ENCODE measurements at regions of chr2 and their contacts with region 1.

Region 1: DNA sequence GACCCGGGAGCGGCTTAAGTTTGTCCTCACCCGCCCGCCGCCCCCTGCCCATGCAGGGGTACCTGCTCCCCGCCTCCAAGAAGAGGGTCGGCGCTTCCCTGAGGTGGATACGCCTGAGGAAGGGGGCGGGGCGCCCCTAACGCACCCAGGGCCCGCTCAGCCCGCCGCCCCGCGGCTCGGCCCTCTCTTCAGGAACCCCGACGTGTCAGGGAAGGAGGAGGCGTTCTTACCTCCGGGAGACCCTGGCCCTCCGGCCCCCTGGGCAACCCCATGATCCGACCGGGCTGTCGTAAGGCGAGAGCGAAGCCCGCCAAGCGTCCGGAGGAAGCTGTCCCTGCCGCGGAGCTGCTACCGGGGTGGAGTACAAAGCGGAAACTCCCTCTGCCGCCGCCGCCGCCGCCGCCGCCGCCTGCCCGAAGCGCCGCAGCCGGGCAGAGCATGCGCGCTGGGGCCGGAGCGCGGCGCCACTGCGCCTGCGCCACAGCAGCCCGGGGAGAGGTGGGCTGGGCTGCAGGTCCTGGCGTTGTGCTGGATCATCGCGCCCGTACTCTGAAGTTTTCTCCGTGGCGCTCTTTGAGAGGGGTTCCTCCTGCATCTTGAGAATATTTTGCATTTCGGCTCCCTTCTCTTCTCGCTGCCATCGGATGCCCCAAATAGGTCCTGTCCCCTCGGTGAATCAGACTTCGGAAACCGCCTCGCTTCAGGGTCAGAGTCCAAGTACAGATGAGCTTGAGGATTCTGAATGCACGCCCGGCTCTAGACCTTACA is at the start of gene CCDC93:
- DNase-seq: peak; percentile 78 to 91 (median 87)
- H3K4me3 ChIP-seq: peak within 1 kb of the TSS; percentile 74 to 91 (median 84)
- H3K4me3 Mint-ChIP-seq: peak within 1 kb of the TSS; percentile 97 to 99
- H3K27ac ChIP-seq: peak within 1 kb of the TSS; percentile 94 to 97
- H3K27ac Mint-ChIP-seq: peak within 1 kb of the TSS; percentile 92 to 97 (median 95)
- H3K4me1 ChIP-seq: peaks cover 58 to 71% of the 10 kb centered on the region in 2 donors
- H3K4me1 Mint-ChIP-seq: peaks cover 67% of the 10 kb centered on the region
- H3K27me3 ChIP-seq: no peaks in the 10 kb centered on the region
- H3K27me3 Mint-ChIP-seq: peaks cover 0 to 7% (median 2%) of the 10 kb centered on the region in 3 donors
- CTCF ChIP-seq: no peak
- polyA plus RNA-seq, gene CCDC93: 2.5 to 20.7 (median 5.8) TPM

Region 2: DNA sequence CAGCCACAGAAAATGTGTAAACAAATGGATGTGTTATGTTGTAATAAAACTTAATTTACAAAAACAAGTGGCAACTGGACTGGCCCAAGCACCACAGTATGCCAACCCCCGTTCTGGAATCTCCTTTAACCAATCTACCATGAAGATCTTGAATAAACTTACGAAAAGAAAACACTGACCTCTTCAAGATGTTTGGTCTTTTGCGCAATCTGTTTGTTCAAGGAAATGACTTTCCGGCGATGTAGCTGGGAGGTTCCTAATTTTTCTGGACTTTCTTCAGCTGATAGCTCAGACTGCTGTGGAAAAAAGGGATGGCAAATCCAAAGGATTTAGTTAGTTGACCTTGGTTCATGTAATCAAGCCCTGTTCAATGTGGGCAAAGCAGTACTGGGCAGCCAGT is 55.7 kb before region 1 on chr2:
- intact Hi-C with region 1: no loop called
- DNase-seq: peak in 2 of 3 donors; percentile 2 to 21
- H3K4me3 ChIP-seq: no peak overlapping the region
- H3K4me3 Mint-ChIP-seq: no peak overlapping the region
- H3K27ac ChIP-seq: peak overlapping the region in 1 of 2 donors; percentile 48
- H3K27ac Mint-ChIP-seq: peak overlapping the region in 6 of 7 donors; percentile 16 to 79 (median 42)
- H3K4me1 ChIP-seq: peaks cover 5 to 7% of the 10 kb centered on the region in 2 donors
- H3K4me1 Mint-ChIP-seq: peaks cover 11% of the 10 kb centered on the region
- H3K27me3 ChIP-seq: no peaks in the 10 kb centered on the region
- H3K27me3 Mint-ChIP-seq: peaks cover 0 to 2% (median 0%) of the 10 kb centered on the region in 3 donors
- CTCF ChIP-seq: no peak

Region 3: GRCh38 chr2:117979911-117980701 is 33.8 kb before region 1 on chr2:
- intact Hi-C with region 1: loop called in 1 of 2 experiments (anchors 2 kb)
- DNase-seq: peak; percentile 25 to 82 (median 75)
- H3K4me3 ChIP-seq: peak overlapping the region in 1 of 3 experiments; percentile 21
- H3K4me3 Mint-ChIP-seq: no peak overlapping the region
- H3K27ac ChIP-seq: peak overlapping the region; percentile 56 to 93
- H3K27ac Mint-ChIP-seq: peak overlapping the region; percentile 93 to 98 (median 97)
- H3K4me1 ChIP-seq: peaks cover 33 to 34% of the 10 kb centered on the region in 2 donors
- H3K4me1 Mint-ChIP-seq: peaks cover 31% of the 10 kb centered on the region
- H3K27me3 ChIP-seq: no peaks in the 10 kb centered on the region
- H3K27me3 Mint-ChIP-seq: peaks cover 0 to 4% (median 0%) of the 10 kb centered on the region in 3 donors
- CTCF ChIP-seq: no peak

Region 4: DNA sequence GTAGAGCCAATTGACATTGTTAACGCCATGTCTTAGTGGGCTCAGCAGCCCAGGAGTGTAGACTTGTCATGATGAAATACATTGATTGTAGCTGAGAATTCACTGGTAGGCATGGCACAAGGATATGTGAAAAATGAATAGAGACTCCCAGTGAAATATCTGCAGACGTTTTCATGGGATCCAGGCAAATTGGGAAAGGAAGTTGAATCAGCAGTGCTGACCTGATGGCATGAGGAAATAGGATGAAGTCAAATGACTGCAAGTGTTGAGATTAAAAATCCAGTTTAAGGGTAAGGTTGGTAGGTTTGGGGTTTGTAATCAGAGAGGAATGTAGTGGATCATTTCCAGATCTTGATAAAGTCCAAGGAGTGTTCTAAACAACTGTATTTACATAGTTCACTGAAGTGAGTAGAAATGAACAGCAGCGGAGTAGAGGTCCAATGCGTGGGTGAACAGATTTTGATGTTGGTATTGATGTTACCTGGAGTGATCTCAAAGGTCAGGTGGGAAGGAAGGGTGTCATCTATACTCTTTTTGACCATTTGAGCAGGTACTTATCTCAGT is 98.9 kb after region 1 on chr2:
- intact Hi-C with region 1: no loop called
- DNase-seq: no peak
- H3K4me3 ChIP-seq: no peak overlapping the region
- H3K4me3 Mint-ChIP-seq: no peak overlapping the region
- H3K27ac ChIP-seq: no peak overlapping the region
- H3K27ac Mint-ChIP-seq: no peak overlapping the region
- H3K4me1 ChIP-seq: no peaks in the 10 kb centered on the region
- H3K4me1 Mint-ChIP-seq: peaks cover 15% of the 10 kb centered on the region
- H3K27me3 ChIP-seq: no peaks in the 10 kb centered on the region
- H3K27me3 Mint-ChIP-seq: no peaks in the 10 kb centered on the region
- CTCF ChIP-seq: no peak

Region 5: DNA sequence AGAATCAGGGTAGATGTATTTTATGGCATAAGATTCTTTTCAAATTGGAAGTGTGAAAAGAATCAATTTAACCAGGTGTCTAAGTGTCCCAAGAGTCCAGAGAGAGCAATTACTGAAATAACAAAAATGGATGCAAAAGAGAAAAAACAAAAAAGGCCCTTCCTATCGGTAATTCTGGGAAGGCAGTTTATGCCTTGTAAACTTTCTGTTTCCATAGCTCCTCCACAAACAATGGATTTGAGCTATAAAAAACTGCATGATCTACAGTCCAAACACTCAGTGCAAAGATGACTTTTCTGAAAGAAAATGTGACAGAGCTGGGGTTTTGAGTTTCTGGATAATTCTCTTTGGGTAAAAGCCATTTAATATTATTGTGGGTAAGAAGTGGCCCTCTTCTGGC is 467.4 kb after region 1 on chr2:
- intact Hi-C with region 1: no loop called
- DNase-seq: no peak
- H3K4me3 ChIP-seq: no peak overlapping the region
- H3K4me3 Mint-ChIP-seq: no peak overlapping the region
- H3K27ac ChIP-seq: no peak overlapping the region
- H3K27ac Mint-ChIP-seq: no peak overlapping the region
- H3K4me1 ChIP-seq: no peaks in the 10 kb centered on the region
- H3K4me1 Mint-ChIP-seq: no peaks in the 10 kb centered on the region
- H3K27me3 ChIP-seq: no peaks in the 10 kb centered on the region
- H3K27me3 Mint-ChIP-seq: peaks cover 2 to 6% (median 4%) of the 10 kb centered on the region in 3 donors
- CTCF ChIP-seq: no peak

Measured in CD14-positive monocyte (primary cell).